ENCODE measurements at regions of chr7 and their contacts with region 1.

Region 1: DNA sequence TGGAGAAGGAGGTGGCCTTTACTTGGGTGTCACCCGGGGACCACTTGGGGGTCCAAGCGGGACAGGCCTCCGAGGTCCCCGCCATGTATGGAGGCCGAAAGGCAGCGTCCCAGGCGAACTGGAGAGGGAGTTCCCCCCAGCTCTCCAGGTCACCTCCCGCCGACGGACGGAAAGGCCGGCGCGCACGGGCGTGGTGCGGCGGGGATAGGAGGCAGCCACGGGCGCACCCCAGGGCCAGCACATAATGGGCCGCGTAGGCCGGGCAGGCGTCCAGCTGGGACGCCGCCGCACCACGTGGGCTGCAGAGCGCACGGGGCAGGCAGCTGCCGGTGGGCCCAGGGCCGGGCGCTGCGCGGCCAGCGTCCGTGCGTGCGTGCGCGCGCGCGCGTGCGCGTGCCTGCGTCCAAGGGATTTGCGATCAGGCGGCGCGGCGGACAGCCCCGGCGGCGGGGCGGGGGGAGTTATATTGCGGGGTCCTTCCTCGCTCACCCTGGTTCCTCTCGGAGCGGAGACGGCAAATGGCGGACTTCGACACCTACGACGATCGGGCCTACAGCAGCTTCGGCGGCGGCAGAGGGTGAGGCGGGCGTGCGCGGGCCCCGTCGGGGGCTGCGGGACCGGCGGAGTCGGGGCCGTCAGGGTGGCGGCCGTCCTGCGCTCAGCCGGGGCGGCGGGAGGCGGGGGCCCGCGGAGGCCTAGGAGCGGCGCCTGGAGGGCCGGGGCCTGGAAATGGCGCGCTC is at the start of gene EIF4H:
- DNase-seq: peak; percentile 95
- H3K4me3 ChIP-seq: peak within 1 kb of the TSS; percentile 98 to 99
- H3K27ac ChIP-seq: peak within 1 kb of the TSS; percentile 95 to 97
- H3K4me1 ChIP-seq: peaks cover 9% of the 10 kb centered on the region
- H3K27me3 ChIP-seq: no peaks in the 10 kb centered on the region
- CTCF ChIP-seq: peak in 1 of 4 experiments; percentile 40
- POLR2A ChIP-seq: peak; percentile 75
- total RNA-seq, gene EIF4H: 199 to 252 TPM

Region 2: DNA sequence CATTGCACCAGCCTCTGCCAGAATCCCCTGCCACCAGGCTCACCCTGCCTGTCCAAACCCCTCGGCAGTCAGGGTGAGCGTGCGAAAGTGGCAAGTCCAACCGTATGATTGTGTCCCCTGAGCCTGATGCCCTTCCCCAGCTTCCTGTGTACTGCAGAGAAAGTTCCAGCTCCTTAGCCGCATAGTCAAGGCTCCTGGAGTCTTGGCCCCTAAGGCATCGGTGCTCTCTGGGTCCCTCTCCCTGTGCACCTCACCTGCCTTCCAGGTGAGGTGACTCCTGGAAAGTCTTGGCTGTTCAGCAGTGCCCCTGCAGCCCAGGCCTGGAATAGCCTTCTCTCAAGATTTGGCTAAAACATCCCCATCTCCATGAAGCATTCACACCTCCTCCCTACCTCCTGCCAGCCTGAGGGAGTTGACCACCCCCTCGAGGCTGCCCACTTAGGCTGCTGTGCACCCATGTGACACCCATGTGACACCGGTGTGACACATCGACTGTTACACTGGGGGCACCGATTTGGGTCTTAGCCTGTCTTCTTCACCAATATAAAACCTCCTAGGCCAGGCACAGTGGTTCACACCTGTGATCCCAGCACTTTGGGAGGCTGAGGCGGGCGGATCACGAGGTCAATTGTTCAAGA is 202.2 kb before region 1 on chr7:
- intact Hi-C with region 1: no loop called
- DNase-seq: no peak
- H3K4me3 ChIP-seq: no peak overlapping the region
- H3K27ac ChIP-seq: no peak overlapping the region
- H3K4me1 ChIP-seq: no peaks in the 10 kb centered on the region
- H3K27me3 ChIP-seq: no peaks in the 10 kb centered on the region
- CTCF ChIP-seq: no peak
- POLR2A ChIP-seq: no peak

Region 3: GRCh38 chr7:74068393-74069085 is 105.5 kb before region 1 on chr7:
- intact Hi-C with region 1: loop called (anchors 5 kb)
- DNase-seq: no peak
- H3K4me3 ChIP-seq: no peak overlapping the region
- H3K27ac ChIP-seq: no peak overlapping the region
- H3K4me1 ChIP-seq: no peaks in the 10 kb centered on the region
- H3K27me3 ChIP-seq: no peaks in the 10 kb centered on the region
- CTCF ChIP-seq: no peak
- POLR2A ChIP-seq: no peak

Region 4: DNA sequence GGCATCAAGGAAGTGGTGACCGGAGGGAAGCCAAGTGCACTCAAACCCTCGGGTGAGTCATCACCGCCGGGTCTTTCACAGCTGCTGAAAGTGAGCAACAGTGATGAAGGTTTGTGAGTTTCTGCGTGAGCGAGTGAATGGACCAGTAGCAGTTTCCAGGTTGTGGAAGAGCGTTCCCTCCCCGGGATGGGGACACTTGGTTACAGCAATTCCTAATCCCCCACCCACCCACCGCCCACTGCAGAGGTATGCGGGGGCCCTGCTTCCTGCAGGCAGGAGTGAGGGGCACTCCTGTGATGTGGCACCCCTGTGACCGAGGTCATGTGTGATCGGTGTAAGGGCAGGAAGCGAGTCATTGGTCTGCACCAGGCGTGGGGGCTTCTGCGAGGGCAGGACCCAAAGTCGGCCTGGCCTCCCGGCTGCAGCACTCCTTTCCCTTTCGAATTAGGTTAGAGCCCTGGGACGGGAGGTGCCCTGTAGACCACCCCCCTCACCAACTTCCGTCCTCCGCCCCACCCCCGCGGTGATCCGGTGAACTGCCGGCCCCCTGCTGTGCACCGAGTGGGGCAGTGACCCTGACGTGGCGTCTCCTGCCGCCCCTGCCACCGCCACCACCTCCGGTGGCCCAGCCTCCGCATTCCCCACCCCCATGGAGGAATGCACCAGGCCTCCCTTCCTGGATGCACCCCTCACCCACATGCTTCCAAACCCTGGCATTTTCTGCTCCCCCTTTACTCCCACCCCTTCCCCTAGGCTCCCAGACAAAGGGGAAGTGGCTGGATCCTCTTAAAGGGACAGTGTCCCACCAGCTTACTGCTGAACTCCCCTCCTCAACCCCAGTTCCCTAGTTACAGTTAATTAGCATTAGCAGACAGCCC is 79.6 kb before region 1 on chr7:
- intact Hi-C with region 1: loop called (anchors 5 kb)
- DNase-seq: peak; percentile 42
- H3K4me3 ChIP-seq: peak overlapping the region; percentile 12 to 13
- H3K27ac ChIP-seq: peak overlapping the region; percentile 57 to 65
- H3K4me1 ChIP-seq: no peaks in the 10 kb centered on the region
- H3K27me3 ChIP-seq: no peaks in the 10 kb centered on the region
- CTCF ChIP-seq: no peak
- POLR2A ChIP-seq: no peak

Measured in prostate gland (tissue), 2 donors.